ENCODE measurements at regions of chr1 and their contacts with region 1.

Region 1: DNA sequence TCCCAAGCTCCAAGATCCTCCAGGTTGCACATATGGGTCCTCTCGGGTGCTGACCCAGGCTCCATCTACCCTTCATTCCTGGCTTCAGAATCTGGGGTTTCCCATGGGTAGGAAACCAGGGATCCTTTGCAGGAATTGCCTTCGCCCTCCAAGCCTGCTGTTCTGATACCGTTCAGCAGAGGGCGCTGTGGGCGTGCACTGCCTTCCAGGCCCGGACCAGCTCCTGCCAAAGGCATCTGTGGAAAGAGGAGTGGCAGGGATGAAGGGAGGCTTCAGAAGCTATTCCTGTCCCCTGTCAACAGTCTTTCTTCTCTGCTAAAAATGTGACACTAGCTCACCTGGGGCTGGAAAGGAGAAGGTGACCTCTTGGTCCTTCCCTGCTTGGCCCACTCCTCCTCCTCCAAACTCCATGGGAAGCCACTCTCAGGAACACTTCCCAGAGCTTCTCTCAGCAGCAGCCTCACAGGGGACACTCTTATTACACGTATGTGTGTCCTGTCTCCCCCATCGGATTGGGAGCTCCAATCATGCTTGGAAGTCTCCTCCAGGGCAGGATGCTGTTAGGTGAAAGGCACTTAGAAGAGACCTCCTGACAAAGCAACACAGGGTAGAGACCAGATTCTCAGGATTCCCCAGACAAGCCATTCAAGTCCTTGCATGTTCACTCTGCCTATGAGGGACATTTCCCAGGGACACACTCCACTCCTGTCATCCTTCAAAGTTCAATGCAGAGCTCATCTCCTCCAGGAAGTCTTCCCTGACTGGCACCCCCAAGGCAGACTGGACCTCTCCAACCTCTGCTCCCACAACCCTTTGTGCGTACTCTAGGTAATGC is 71.3 kb downstream of the VWA5B1 start:
- DNase-seq: peak; percentile 42
- ATAC-seq: peak; percentile 84
- H3K4me3 ChIP-seq: no peak overlapping the region
- H3K27ac ChIP-seq: no peak overlapping the region
- H3K4me1 ChIP-seq: peaks cover 13 to 19% of the 10 kb centered on the region in 2 experiments; a peak in 3 of 4 replicates
- H3K27me3 ChIP-seq: no peaks in the 10 kb centered on the region
- CTCF ChIP-seq: peak; percentile 84 to 96 (median 96)
- POLR2A ChIP-seq: no peak
- RAD21 ChIP-seq: peak; percentile 93

Region 2: GRCh38 chr1:20212685-20213331 is 149.2 kb before region 1 on chr1:
- CTCF ChIA-PET with region 1: interaction called, 5 read pairs
- POLR2A ChIA-PET with region 1: no interaction called
- RAD21 ChIA-PET with region 1: interaction called in 1 of 2 experiments, 4 read pairs
- intact Hi-C with region 1: loop called (anchors 10 kb)
- DNase-seq: peak; percentile 54
- ATAC-seq: peak; percentile 90
- H3K4me3 ChIP-seq: peak overlapping the region; percentile 2 to 24; a peak in 1 of 4 replicates
- H3K27ac ChIP-seq: no peak overlapping the region
- H3K4me1 ChIP-seq: peaks cover 9 to 28% of the 10 kb centered on the region in 2 experiments
- H3K27me3 ChIP-seq: no peaks in the 10 kb centered on the region
- CTCF ChIP-seq: peak; percentile 76 to 86 (median 81)
- POLR2A ChIP-seq: no peak
- RAD21 ChIP-seq: peak; percentile 86

Region 3: DNA sequence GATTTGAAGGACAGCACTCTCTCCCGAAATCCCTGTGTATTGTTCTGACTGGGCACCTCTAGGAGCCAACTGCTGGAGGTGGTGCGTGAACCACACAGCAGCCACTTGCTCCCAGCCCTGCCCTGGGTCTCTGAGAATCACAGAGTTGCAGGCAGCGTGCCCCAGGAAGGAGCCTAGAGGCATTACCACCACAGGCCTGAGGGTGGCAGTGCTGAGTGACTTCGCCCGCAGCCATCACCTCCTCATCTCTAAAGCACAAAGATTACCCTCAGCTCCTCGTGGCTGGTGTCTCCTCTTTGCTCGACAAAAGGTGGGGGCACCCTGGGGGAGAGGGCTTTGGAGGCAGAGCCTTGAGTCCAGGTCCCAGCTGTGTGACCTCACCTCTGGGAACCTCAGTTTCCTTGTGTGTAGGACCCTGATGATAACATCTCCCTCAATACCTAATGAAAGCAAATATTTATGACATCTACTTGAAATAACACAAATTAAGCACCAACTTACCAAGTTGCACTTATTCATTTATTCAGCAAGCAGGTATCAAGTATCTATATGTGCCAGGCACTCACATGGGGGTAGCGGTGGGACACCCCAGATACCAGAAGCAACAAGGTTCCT is 15.0 kb after region 1 on chr1:
- CTCF ChIA-PET with region 1: interaction called, 14 read pairs
- POLR2A ChIA-PET with region 1: no interaction called
- RAD21 ChIA-PET with region 1: no interaction called
- intact Hi-C with region 1: no loop called
- DNase-seq: peak; percentile 21
- ATAC-seq: peak; percentile 94
- H3K4me3 ChIP-seq: no peak overlapping the region
- H3K27ac ChIP-seq: no peak overlapping the region
- H3K4me1 ChIP-seq: peaks cover 4 to 33% of the 10 kb centered on the region in 2 experiments; a peak in 3 of 4 replicates
- H3K27me3 ChIP-seq: no peaks in the 10 kb centered on the region
- CTCF ChIP-seq: peak; percentile 57 to 92 (median 81); a peak in 5 of 6 replicates
- POLR2A ChIP-seq: no peak
- RAD21 ChIP-seq: peak; percentile 68

Region 4: GRCh38 chr1:20430355-20431175 is 68.5 kb after region 1 on chr1:
- CTCF ChIA-PET with region 1: interaction called, 10 read pairs
- POLR2A ChIA-PET with region 1: no interaction called
- RAD21 ChIA-PET with region 1: no interaction called
- intact Hi-C with region 1: loop called (anchors 5 kb)
- DNase-seq: no peak
- ATAC-seq: peak; percentile 87
- H3K4me3 ChIP-seq: no peak overlapping the region
- H3K27ac ChIP-seq: no peak overlapping the region
- H3K4me1 ChIP-seq: peaks cover 3 to 22% of the 10 kb centered on the region in 2 experiments; a peak in 2 of 4 replicates
- H3K27me3 ChIP-seq: no peaks in the 10 kb centered on the region
- CTCF ChIP-seq: peak; percentile 95 to 98 (median 95)
- POLR2A ChIP-seq: no peak
- RAD21 ChIP-seq: peak; percentile 94

Region 5: GRCh38 chr1:20521960-20522861 is 160.2 kb after region 1 on chr1:
- CTCF ChIA-PET with region 1: no interaction called
- POLR2A ChIA-PET with region 1: no interaction called
- RAD21 ChIA-PET with region 1: no interaction called
- intact Hi-C with region 1: no loop called
- DNase-seq: peak; percentile 81
- ATAC-seq: peak; percentile 94
- H3K4me3 ChIP-seq: peak overlapping the region in 1 of 2 experiments; percentile 18; a peak in 2 of 4 replicates
- H3K27ac ChIP-seq: no peak overlapping the region
- H3K4me1 ChIP-seq: peaks cover 0 to 8% of the 10 kb centered on the region in 2 experiments; a peak in 2 of 4 replicates
- H3K27me3 ChIP-seq: no peaks in the 10 kb centered on the region
- CTCF ChIP-seq: peak; percentile 83 to 96 (median 91)
- POLR2A ChIP-seq: no peak
- RAD21 ChIP-seq: peak; percentile 99